ENCODE measurements at regions of chr14 and their contacts with region 1.

Region 1: DNA sequence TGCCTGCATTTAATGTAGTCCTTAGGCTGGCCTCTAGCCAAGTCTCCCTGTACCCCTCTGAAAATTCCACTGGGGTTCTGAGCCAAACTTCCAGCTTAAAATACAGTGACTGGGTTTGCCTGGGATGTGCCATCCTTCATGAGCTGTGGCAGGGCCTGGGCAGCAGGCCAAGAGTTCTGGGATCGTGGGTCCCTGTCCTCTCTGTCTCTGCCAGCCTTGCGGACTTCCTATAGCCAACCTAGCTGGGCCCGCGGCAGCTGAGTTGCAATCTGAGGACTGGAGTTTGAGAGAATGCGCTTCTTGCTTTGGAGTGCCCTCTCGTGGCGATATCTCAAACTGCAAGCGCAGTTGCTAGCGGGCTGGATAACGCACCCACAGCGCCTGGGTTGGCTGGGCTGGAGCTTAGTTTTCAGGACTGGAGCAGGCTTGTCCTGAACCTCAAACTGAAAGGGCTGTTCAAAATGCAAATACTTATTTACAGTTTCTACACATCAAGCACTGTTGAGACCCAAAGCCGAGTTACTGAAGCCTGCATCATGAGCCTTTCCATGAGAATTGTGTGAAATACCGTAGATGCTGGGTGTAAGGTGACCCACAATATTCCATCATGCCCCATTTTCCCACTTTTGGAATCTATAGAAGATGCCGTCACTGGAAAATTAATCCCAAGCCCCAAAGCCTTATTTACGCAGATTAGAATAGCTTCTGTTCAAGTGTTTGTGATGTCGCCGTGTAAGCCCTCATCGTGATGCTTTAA is 7.3 kb upstream of the IFI27L2 start:
- DNase-seq: peak; percentile 74 to 83
- ATAC-seq: peak; percentile 87 to 98
- H3K4me3 ChIP-seq: no peak overlapping the region
- H3K27ac ChIP-seq: no peak overlapping the region
- H3K4me1 ChIP-seq: no peaks in the 10 kb centered on the region
- CTCF ChIP-seq: peak; percentile 85
- EP300 ChIP-seq: no peak
- POLR2A ChIP-seq: no peak
- RAD21 ChIP-seq: peak; percentile 84 to 93

Region 2: DNA sequence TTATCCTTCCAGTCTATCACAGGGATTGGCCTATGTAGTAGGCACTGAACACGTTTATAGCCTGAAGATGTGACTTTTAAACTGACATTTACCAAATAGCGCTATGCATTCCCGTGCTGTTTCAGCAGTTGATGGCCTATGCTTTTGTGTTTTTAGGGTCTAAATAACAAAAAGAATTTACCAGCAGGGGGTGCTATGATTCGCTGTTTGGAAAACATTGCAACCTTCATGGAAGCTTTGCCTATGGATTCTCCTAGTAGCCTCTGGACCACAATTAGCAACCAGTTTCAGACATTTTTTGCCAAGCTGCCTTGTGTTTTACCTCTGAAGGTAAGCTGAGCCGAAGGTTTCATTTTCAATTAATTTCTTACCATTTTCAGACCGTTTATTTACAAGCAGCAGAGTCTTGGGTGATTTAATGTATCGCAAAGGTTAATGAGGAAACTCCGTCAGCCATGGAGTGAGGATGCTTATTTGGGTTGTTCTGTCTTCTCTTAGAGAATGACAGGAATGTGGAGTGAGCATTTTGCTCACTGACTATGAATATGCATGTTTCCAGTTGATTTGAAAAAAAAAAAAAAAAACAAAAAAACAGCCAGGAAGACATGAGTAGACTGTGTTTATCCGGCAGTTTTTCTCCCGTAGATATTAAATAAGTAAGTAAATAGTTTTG is 481.5 kb before region 1 on chr14:
- CTCF ChIA-PET with region 1: interaction called, 14 read pairs
- POLR2A ChIA-PET with region 1: no interaction called
- DNase-seq: peak; percentile 22 to 58
- ATAC-seq: peak; percentile 50 to 71; a peak in 4 of 6 replicates
- H3K4me3 ChIP-seq: no peak overlapping the region
- H3K27ac ChIP-seq: no peak overlapping the region
- H3K4me1 ChIP-seq: no peaks in the 10 kb centered on the region
- CTCF ChIP-seq: peak; percentile 59
- EP300 ChIP-seq: no peak
- POLR2A ChIP-seq: no peak
- RAD21 ChIP-seq: peak; percentile 59 to 67

Region 3: DNA sequence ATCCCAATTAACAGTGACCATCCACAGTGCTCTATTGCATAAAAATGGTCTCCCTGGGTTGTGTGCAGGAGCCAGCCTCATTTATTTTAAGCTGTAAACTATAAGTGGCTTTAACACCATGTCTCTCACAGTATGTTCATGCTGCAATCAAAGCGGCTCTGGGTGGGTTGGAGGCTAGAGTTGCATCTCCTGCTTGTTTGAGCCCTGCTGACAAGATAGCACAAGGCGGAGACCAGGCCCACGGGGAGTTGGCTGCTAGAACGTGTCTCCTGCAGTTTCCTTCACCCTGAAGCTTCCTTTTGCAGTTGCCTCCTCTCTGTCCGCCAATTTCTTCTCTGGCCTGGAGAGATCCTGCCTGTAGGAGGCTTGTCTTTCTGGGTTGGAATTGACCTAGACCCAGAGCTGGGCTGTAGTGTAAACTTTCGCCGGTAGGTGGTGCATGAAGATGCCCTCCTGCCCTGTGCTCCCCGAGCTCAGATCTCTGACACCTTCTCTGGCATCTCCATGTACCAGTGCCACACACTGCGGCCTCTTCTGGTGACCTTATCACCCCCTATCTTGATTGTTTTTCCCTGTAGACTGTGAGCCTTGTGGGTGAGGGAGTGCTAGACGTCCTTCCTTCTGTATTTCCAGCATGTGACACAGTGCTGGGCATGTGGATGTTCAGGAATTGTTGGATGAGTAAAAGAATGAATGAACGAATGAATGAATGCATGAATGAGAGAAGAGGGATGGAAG is 100.3 kb before region 1 on chr14:
- CTCF ChIA-PET with region 1: interaction called, 78 read pairs
- POLR2A ChIA-PET with region 1: no interaction called
- DNase-seq: peak; percentile 71 to 76
- ATAC-seq: peak; percentile 87 to 97
- H3K4me3 ChIP-seq: no peak overlapping the region
- H3K27ac ChIP-seq: no peak overlapping the region
- H3K4me1 ChIP-seq: no peaks in the 10 kb centered on the region
- CTCF ChIP-seq: peak; percentile 62
- EP300 ChIP-seq: no peak
- POLR2A ChIP-seq: no peak
- RAD21 ChIP-seq: peak; percentile 54 to 58; a peak in 4 of 5 replicates

Region 4: DNA sequence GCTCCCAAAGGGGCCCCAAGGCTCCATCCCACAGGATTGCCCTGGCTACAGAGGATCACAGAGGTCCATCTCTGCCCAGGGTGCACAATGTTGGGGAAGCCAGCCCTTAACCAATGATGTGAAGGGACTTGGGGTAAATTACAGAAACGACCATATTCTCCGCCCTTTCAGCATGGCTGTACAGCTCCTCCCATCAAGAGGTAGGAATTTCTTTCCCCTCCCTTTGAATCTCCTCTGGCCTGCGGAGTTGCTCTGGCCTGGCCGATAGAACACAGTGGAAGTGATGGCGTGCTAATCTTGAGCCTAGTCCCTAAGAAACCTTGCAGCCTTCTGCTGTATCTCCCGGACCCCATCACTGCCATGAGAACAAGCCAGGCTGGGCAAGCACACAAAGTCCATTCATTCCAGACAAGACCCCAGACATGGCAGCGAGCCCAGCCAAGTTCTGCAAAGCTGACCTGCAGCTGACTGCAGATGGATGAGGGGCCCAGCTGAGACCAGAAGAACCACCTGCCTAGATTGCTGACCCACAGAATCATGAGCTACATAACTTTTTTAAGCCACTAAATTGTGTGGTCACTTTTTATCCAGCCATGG is 33.1 kb before region 1 on chr14:
- CTCF ChIA-PET with region 1: interaction called, 10 read pairs
- POLR2A ChIA-PET with region 1: no interaction called
- DNase-seq: no peak
- ATAC-seq: no peak
- H3K4me3 ChIP-seq: no peak overlapping the region
- H3K27ac ChIP-seq: no peak overlapping the region
- H3K4me1 ChIP-seq: no peaks in the 10 kb centered on the region; the same call in 2 of the 3 replicates
- CTCF ChIP-seq: no peak
- EP300 ChIP-seq: no peak
- POLR2A ChIP-seq: no peak
- RAD21 ChIP-seq: no peak

Region 5: DNA sequence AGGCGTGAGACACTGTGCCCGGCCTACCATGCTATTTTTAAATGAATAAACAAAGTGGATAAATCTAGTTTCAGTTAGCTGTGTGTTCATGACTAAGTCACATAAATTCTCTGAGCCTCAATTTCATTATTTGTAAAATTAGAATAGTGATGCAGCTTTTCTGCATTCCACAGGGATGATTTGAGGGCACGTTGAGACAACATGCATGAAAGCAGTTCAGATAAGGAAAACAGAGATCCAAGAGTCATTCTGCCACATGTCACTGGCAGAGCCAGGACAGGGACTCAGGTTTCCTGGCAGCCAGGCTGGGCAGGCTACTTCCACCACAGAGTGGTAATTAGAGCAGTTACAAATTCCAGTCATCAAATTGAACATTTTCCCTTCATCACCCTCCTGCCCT is 34.5 kb after region 1 on chr14:
- CTCF ChIA-PET with region 1: interaction called, 13 read pairs
- POLR2A ChIA-PET with region 1: no interaction called
- DNase-seq: no peak
- ATAC-seq: no peak
- H3K4me3 ChIP-seq: no peak overlapping the region
- H3K27ac ChIP-seq: no peak overlapping the region
- H3K4me1 ChIP-seq: peaks cover 10% of the 10 kb centered on the region; the same call in 2 of the 3 replicates
- CTCF ChIP-seq: no peak
- EP300 ChIP-seq: no peak
- POLR2A ChIP-seq: no peak
- RAD21 ChIP-seq: no peak

Region 6: GRCh38 chr14:94805680-94806288 is 669.0 kb after region 1 on chr14:
- CTCF ChIA-PET with region 1: no interaction called
- POLR2A ChIA-PET with region 1: no interaction called
- DNase-seq: no peak
- ATAC-seq: no peak
- H3K4me3 ChIP-seq: no peak overlapping the region
- H3K27ac ChIP-seq: no peak overlapping the region
- H3K4me1 ChIP-seq: no peaks in the 10 kb centered on the region
- CTCF ChIP-seq: no peak
- EP300 ChIP-seq: no peak
- POLR2A ChIP-seq: no peak
- RAD21 ChIP-seq: no peak